Dorsolateral prefrontal cortex (tissue), 120 donors: ENCODE measurements at regions of chr9 and their contacts with region 1.

Region 1: GRCh38 chr9:129028192-129028957 is at the start of gene SH3GLB2:
- DNase-seq: peak; percentile 91 to 100 (median 97)
- H3K4me3 ChIP-seq: peak within 1 kb of the TSS; percentile 66 to 99 (median 92)
- H3K27ac ChIP-seq: peak within 1 kb of the TSS; percentile 51 to 98 (median 92)
- H3K27me3 ChIP-seq: no peaks in the 10 kb centered on the region
- CTCF ChIP-seq: peak; percentile 78 to 98 (median 92)
- total RNA-seq, gene SH3GLB2: 128 to 337 (median 194) TPM

Region 2: GRCh38 chr9:128972956-128973355 is 55.4 kb before region 1 on chr9:
- intact Hi-C with region 1: no loop called
- DNase-seq: no peak
- H3K4me3 ChIP-seq: no peak overlapping the region
- H3K27ac ChIP-seq: no peak overlapping the region
- H3K27me3 ChIP-seq: no peaks in the 10 kb centered on the region
- CTCF ChIP-seq: no peak

Region 3: GRCh38 chr9:128992995-128993394 is 35.4 kb before region 1 on chr9:
- intact Hi-C with region 1: loop called in 1 of 2 experiments (anchors 5 kb)
- DNase-seq: peak; percentile 63 to 86 (median 71)
- H3K4me3 ChIP-seq: peak overlapping the region in 5 of 59 donors; percentile 14 to 38 (median 23)
- H3K27ac ChIP-seq: peak overlapping the region in 53 of 59 donors; percentile 5 to 95 (median 61)
- H3K27me3 ChIP-seq: no peaks in the 10 kb centered on the region
- CTCF ChIP-seq: peak in 54 of 56 donors; percentile 28 to 76 (median 56)